ENCODE measurements at regions of chr1 and their contacts with region 1.

Region 1: GRCh38 chr1:179002552-179003345 is 22.9 kb upstream of the FAM20B start:
- DNase-seq: peak; percentile 79
- ATAC-seq: peak; percentile 87
- H3K4me3 Mint-ChIP-seq: no peak overlapping the region
- H3K27ac Mint-ChIP-seq: peak overlapping the region; percentile 62
- H3K4me1 Mint-ChIP-seq: peaks cover 17% of the 10 kb centered on the region
- H3K27me3 Mint-ChIP-seq: peaks cover 3% of the 10 kb centered on the region

Region 2: GRCh38 chr1:178532392-178532791 is 470.4 kb before region 1 on chr1:
- CTCF ChIA-PET with region 1: interaction called, 12 read pairs
- POLR2A ChIA-PET with region 1: no interaction called
- DNase-seq: peak; percentile 79
- ATAC-seq: peak; percentile 93
- H3K4me3 Mint-ChIP-seq: no peak overlapping the region
- H3K27ac Mint-ChIP-seq: no peak overlapping the region
- H3K4me1 Mint-ChIP-seq: peaks cover 6% of the 10 kb centered on the region
- H3K27me3 Mint-ChIP-seq: no peaks in the 10 kb centered on the region

Region 3: GRCh38 chr1:178725603-178726517 is 276.9 kb before region 1 on chr1:
- CTCF ChIA-PET with region 1: interaction called, 10 read pairs
- POLR2A ChIA-PET with region 1: no interaction called
- DNase-seq: peak; percentile 74
- ATAC-seq: peak; percentile 73
- H3K4me3 Mint-ChIP-seq: peak overlapping the region; percentile 82
- H3K27ac Mint-ChIP-seq: peak overlapping the region; percentile 20
- H3K4me1 Mint-ChIP-seq: peaks cover 7% of the 10 kb centered on the region
- H3K27me3 Mint-ChIP-seq: peaks cover 15% of the 10 kb centered on the region

Region 4: GRCh38 chr1:178774263-178774662 is 228.5 kb before region 1 on chr1:
- CTCF ChIA-PET with region 1: interaction called, 111 read pairs
- POLR2A ChIA-PET with region 1: no interaction called
- DNase-seq: no peak
- ATAC-seq: no peak
- H3K4me3 Mint-ChIP-seq: no peak overlapping the region
- H3K27ac Mint-ChIP-seq: no peak overlapping the region
- H3K4me1 Mint-ChIP-seq: no peaks in the 10 kb centered on the region
- H3K27me3 Mint-ChIP-seq: no peaks in the 10 kb centered on the region

Region 5: GRCh38 chr1:179016747-179017549 is 14.2 kb after region 1 on chr1:
- CTCF ChIA-PET with region 1: interaction called, 15 read pairs
- POLR2A ChIA-PET with region 1: no interaction called
- DNase-seq: no peak
- ATAC-seq: no peak
- H3K4me3 Mint-ChIP-seq: no peak overlapping the region
- H3K27ac Mint-ChIP-seq: no peak overlapping the region
- H3K4me1 Mint-ChIP-seq: no peaks in the 10 kb centered on the region
- H3K27me3 Mint-ChIP-seq: peaks cover 8% of the 10 kb centered on the region

Region 6: DNA sequence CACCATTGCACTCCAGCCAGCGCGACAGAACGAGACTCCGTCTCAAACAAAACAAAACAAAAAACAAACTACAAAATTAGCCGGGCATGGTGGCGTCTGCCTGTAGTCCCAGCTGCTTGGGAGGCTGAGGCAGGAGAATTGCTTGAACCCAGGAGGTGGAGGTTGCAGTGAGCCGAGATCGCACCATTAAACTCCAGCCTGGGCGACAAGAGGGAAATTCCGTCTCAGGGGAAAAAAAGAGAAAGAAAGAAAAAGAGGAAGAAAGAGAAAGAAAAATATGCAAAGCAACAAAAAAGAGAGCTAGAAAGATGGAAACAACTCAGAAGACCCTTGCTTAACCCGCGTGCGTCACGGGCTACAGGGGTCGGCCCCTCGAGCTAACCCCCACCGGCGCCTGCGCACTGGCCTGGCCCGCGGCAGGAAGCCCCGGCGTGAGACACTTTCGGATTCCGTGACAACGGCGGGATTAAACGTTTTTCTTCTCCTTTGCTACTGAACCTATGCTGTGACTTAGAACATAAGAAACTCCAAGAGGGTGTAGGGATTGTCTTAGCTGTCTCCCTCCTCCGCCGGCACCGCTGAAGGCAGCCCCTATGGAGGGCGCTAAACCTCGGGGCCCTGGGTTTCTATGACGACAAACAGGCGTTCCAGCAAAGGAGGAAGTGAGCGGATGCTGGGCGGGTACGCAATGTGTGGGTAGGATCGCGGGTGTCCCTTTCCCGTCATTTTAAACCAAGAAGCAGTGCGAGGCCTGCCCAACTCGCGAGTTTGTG is 362.8 kb after region 1 on chr1 and contains the start of gene AXDND1:
- CTCF ChIA-PET with region 1: interaction called, 12 read pairs
- POLR2A ChIA-PET with region 1: no interaction called
- DNase-seq: peak; percentile 93
- ATAC-seq: peak; percentile 95
- H3K4me3 Mint-ChIP-seq: peak within 1 kb of the TSS; percentile 93
- H3K27ac Mint-ChIP-seq: peak within 1 kb of the TSS; percentile 100
- H3K4me1 Mint-ChIP-seq: peaks cover 7% of the 10 kb centered on the region
- H3K27me3 Mint-ChIP-seq: no peaks in the 10 kb centered on the region
- total RNA-seq, gene AXDND1: 1.4 TPM